ENCODE measurements at regions of chr19 and their contacts with region 1.

Region 1: DNA sequence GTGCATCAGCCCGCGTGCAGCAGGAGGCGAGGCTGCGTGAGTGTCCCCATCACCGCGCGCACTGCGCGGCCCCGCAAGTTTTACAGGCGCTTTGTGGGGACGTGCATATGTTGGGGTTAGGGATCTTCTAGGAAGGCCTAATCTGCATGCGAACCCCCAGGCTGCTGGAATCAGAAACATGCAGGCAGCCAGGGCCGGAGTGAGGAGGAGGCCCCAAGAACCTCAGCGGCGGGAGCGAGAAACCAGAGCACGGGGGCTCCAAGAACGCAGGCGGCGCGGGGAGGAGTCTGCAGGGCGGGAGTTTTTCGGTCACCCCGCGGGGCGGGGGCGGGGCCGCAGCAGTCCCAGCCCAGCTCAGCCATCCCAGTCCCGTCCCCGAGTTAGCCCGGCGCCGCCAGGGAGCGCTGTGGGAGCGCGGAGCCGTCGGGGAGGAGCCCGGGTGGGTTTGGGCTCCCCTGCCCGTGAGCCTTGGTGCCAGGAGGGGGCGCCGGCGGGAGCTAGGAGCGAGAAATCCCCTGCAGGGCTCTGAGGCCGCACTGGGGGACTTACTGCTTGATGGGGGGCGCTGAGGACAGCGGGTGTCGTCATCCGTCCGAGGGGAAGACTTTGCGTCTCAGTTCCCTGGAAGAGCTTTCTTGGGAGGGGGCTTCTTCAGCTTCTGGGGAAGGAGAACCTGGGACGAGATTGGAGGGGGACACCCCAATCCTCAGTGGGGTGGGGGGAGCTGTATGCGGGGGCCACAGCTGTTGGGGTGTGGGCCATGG is 933 bp upstream of the NRTN start:
- DNase-seq: peak; percentile 83 to 85
- H3K4me3 ChIP-seq: peak overlapping the region; percentile 11 to 65 (median 54)
- H3K27ac ChIP-seq: peak overlapping the region in 1 of 2 donors; percentile 33
- H3K4me1 ChIP-seq: no peaks in the 10 kb centered on the region
- H3K27me3 ChIP-seq: peaks cover 4 to 9% of the 10 kb centered on the region in 2 donors
- CTCF ChIP-seq: peak; percentile 54 to 87 (median 78)
- POLR2A ChIP-seq: no peak

Region 2: GRCh38 chr19:4877753-4878490 is 926.0 kb before region 1 on chr19:
- intact Hi-C with region 1: loop called (anchors 5 kb)
- DNase-seq: peak in 1 of 2 donors; percentile 86
- H3K4me3 ChIP-seq: peak overlapping the region in 2 of 3 donors; percentile 8 to 28
- H3K27ac ChIP-seq: peak overlapping the region; percentile 74 to 80
- H3K4me1 ChIP-seq: no peaks in the 10 kb centered on the region
- H3K27me3 ChIP-seq: no peaks in the 10 kb centered on the region
- CTCF ChIP-seq: no peak
- POLR2A ChIP-seq: no peak

Region 3: GRCh38 chr19:5250127-5250659 is 553.7 kb before region 1 on chr19:
- intact Hi-C with region 1: no loop called
- DNase-seq: no peak
- H3K4me3 ChIP-seq: no peak overlapping the region
- H3K27ac ChIP-seq: no peak overlapping the region
- H3K4me1 ChIP-seq: no peaks in the 10 kb centered on the region
- H3K27me3 ChIP-seq: no peaks in the 10 kb centered on the region
- CTCF ChIP-seq: no peak
- POLR2A ChIP-seq: no peak

Region 4: DNA sequence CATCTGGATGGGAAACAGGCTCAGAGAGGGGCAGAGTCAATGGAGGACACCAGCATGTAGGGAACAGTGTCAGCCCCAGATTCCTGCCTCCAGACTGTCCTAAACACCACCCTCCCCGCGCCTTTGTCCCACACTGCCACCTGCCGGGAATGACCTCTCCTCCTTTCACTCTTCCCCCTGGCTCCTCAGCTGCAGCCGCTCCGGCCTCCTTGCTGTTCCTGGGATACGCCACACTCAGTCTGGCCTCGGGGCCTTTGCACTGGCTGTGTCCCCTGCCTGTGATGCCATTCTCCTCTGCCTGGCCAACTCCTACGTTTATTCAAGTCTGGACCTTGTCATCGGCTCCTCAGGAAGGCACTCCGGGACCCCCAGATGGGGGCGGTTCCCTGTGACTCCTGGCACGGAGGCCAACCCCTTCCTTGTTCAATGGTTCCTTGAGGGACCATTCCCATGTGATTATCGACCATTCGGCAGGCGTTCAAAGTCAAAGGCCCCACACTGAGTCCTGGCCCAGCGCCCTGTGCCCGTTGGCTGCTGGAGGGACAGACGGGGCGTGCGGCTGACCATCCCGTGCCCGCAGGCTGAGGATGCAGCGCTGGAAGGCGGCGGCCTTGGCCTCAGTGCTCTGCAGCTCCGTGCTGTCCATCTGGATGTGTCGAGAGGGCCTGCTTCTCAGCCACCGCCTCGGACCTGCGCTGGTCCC is 19.8 kb after region 1 on chr19:
- intact Hi-C with region 1: no loop called
- DNase-seq: no peak
- H3K4me3 ChIP-seq: no peak overlapping the region
- H3K27ac ChIP-seq: no peak overlapping the region
- H3K4me1 ChIP-seq: peaks cover 0 to 3% of the 10 kb centered on the region in 2 donors
- H3K27me3 ChIP-seq: no peaks in the 10 kb centered on the region
- CTCF ChIP-seq: no peak
- POLR2A ChIP-seq: no peak

Region 5: GRCh38 chr19:5904352-5905113 is 100.6 kb after region 1 on chr19 and contains the start of gene VMAC:
- intact Hi-C with region 1: loop called (anchors 10 kb)
- DNase-seq: peak; percentile 100
- H3K4me3 ChIP-seq: peak within 1 kb of the TSS; percentile 92 to 95 (median 93)
- H3K27ac ChIP-seq: peak within 1 kb of the TSS; percentile 93
- H3K4me1 ChIP-seq: peaks cover 0 to 10% of the 10 kb centered on the region in 2 donors
- H3K27me3 ChIP-seq: no peaks in the 10 kb centered on the region
- CTCF ChIP-seq: no peak
- POLR2A ChIP-seq: no peak
- total RNA-seq, gene VMAC: 6.1 to 11.8 (median 9.2) TPM

Measured in breast epithelium (tissue), 4 donors.